Activated naive CD4-positive, alpha-beta T cell treated with anti-CD3 and anti-CD28 coated beads for 36 hours (primary cell): ENCODE measurements at regions of chr3 and their contacts with region 1.

Region 1: GRCh38 chr3:158434412-158435038 is 136.5 kb upstream of the MLF1 start:
- DNase-seq: peak; percentile 63
- H3K4me3 Mint-ChIP-seq: no peak overlapping the region
- H3K27ac Mint-ChIP-seq: no peak overlapping the region
- H3K4me1 Mint-ChIP-seq: no peaks in the 10 kb centered on the region
- H3K27me3 Mint-ChIP-seq: no peaks in the 10 kb centered on the region

Region 2: DNA sequence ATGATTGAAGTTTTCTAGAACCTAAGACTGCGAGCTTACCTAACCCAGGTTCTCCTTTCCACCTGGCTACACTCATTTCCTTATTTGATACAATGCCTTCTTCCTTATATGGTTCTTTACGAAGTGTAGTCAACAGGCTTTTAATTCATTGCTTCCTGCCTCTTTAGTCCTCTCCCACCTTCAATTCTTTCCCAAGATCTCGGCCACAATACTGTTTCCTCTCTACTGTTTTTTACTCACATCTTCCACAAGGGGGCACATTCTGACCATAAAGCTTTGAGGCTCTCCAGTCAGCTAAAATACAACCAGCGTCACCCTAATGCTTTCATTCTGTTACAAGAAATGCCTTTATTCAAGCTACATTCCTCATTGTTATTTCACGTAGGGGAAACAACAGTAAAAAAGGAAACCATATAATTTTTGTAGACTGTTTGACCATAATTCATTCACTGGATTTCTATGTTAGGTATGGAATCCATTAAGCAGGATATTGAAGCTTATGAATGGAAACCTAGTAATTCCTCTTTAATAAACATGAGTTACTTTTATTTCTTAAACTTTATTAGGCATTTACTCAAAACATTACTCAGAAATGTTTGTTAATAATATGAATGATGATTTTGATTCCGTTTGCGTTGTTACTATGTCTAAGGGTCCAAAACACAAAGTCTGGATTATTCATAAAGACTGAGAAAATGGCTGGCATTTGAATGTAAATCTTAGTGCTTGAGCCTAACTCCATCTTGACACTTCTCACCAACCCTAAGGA is 901.8 kb before region 1 on chr3:
- CTCF ChIA-PET with region 1: no interaction called
- intact Hi-C with region 1: loop called (anchors 2 kb)
- DNase-seq: peak; percentile 31
- H3K4me3 Mint-ChIP-seq: no peak overlapping the region
- H3K27ac Mint-ChIP-seq: no peak overlapping the region
- H3K4me1 Mint-ChIP-seq: no peaks in the 10 kb centered on the region
- H3K27me3 Mint-ChIP-seq: no peaks in the 10 kb centered on the region

Region 3: DNA sequence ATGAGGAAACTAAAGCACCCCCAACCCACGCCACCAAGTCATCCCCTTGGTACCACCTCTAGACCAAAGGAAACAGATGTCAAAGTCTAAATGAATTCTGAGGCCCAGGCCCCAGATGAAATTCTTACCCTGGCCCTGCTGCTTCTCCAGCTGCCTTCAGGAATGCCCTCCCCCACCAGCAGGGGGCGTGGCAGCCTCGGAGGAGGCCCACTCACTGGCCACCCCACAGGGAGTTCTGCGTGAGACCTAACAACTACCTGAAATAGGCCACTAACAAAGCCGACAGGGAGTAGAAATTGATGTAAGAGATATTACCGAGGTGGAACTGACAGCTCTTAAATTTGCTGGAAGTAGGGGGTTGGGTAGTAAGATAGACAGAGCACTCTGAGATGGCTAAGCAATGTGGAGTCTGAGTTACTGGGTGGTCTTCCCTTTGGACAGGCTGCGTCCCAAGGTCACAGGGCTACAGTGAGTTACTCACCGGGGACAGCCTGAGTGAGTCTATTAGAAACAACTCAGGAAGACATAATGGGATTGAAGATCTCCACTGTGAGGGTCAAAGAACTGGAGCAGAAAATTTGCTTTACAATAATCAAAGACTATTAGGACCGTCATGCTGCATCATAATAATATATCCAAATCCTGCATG is 569.0 kb before region 1 on chr3:
- CTCF ChIA-PET with region 1: interaction called, 15 read pairs
- intact Hi-C with region 1: loop called (anchors 1 kb)
- DNase-seq: peak; percentile 55
- H3K4me3 Mint-ChIP-seq: no peak overlapping the region
- H3K27ac Mint-ChIP-seq: no peak overlapping the region
- H3K4me1 Mint-ChIP-seq: no peaks in the 10 kb centered on the region
- H3K27me3 Mint-ChIP-seq: no peaks in the 10 kb centered on the region

Region 4: GRCh38 chr3:158091531-158091930 is 343.0 kb before region 1 on chr3:
- CTCF ChIA-PET with region 1: no interaction called
- intact Hi-C with region 1: loop called (anchors 2 kb)
- DNase-seq: no peak
- H3K4me3 Mint-ChIP-seq: no peak overlapping the region
- H3K27ac Mint-ChIP-seq: no peak overlapping the region
- H3K4me1 Mint-ChIP-seq: no peaks in the 10 kb centered on the region
- H3K27me3 Mint-ChIP-seq: peaks cover 66% of the 10 kb centered on the region

Region 5: GRCh38 chr3:158491968-158492367 is 57.4 kb after region 1 on chr3:
- CTCF ChIA-PET with region 1: no interaction called
- intact Hi-C with region 1: no loop called
- DNase-seq: no peak
- H3K4me3 Mint-ChIP-seq: no peak overlapping the region
- H3K27ac Mint-ChIP-seq: no peak overlapping the region
- H3K4me1 Mint-ChIP-seq: no peaks in the 10 kb centered on the region
- H3K27me3 Mint-ChIP-seq: no peaks in the 10 kb centered on the region

Region 6: DNA sequence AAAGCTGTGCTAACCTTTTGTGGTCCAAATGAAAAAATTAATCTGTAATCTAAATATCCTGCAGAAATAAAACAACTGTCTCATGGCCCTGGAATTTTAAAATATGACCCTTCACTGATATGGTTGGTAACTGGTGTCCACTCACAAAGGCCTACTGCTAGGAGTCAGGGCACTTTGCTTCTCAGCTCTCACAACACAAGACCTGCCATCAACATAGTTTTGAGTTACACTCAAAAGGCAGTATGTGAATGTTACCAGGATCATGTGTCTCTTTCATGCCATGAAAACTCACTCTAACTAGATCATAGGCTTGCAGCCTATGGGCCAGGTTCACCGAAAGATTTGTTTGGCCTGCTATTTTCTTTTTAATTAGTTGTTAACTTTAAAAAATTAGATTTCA is 126.5 kb after region 1 on chr3:
- CTCF ChIA-PET with region 1: no interaction called
- intact Hi-C with region 1: no loop called
- DNase-seq: no peak
- H3K4me3 Mint-ChIP-seq: no peak overlapping the region
- H3K27ac Mint-ChIP-seq: no peak overlapping the region
- H3K4me1 Mint-ChIP-seq: no peaks in the 10 kb centered on the region
- H3K27me3 Mint-ChIP-seq: peaks cover 11% of the 10 kb centered on the region